ENCODE measurements at regions of chr1 and their contacts with region 1.

Region 1: GRCh38 chr1:174074757-174075156 is 52.6 kb upstream of the RC3H1 start:
- DNase-seq: no peak

Region 2: DNA sequence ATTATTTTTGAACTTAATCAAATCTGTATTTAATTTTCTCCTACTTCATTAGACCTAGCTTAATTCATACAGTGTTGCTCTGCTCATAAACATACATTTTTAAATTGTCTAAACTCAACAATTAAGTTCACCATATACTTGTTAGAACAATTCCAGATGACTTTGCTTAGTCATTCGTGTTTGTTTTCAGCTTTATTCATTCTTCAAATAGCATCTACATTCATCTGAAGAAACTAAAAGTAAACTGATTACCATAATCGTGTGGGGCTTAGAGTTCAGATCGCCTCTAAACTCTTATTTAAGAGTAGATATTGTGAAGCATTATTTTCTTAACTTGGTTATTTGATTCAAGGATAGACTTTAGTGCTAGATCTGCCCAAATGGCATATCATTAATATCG is 325.6 kb before region 1 on chr1:
- intact Hi-C with region 1: no loop called
- DNase-seq: no peak

Region 3: DNA sequence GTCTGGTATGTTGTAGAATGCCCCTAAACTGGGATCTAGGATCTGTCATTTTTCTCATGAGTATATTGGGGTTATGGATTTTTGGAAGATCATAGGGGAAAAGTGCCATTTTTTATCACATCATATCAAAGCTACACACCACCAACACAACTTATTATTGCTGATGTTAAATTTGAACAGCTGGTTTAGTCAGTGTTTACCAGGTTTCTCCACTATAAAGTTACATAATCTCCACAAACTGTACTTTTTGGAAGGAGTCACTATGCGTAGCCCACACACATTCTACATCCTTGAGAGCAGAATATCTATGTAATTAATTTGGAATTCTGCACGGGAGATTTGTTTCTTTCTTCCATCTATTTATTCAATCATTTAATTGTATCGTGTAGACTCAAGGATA is 87.8 kb before region 1 on chr1:
- intact Hi-C with region 1: loop called (anchors 5 kb)
- DNase-seq: no peak